HCT116 (cell line): ENCODE measurements at regions of chr7 and their contacts with region 1.

Region 1: DNA sequence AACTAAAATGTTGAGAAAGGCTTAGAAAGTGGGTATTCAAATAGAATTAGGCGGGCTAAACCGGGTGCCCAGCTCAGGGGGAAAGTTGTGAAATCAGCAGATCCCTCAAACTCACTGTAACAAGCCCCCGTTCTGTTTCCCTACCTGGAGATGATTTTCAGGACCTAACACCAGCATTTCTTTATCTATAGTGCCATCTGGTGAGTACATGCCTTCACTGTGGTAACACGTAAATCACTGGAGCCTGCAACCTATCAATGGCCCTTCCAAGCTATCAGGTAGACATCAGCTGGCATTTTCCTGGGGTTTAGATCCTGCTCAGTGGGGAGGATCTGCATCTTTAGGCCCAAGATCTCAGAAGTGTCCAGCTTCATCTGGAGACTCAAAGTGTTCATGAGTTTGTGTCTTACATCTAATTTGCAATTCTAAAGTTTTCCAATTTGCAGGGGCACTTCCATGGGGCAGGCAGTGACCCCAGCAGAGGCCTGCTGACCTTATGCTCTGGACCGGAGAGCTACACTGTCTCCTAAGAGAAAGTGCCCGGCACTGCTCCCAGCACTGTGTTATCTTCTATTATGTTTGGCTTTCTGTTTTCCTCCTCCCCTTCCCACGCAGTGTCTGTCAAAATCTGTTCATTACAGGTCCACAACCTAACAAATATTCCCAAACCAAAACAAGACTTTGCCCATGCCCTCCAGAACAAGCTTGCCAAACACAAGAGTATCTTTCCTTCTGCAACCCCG is 132.5 kb downstream of the LSM5 start:
- DNase-seq: peak; percentile 8
- ATAC-seq: peak; percentile 75
- H3K4me3 ChIP-seq: no peak overlapping the region
- H3K27ac ChIP-seq: no peak overlapping the region
- H3K4me1 ChIP-seq: no peaks in the 10 kb centered on the region
- H3K27me3 ChIP-seq: peaks cover 78% of the 10 kb centered on the region
- CTCF ChIP-seq: peak; percentile 12 to 28 (median 16); a peak in 3 of 6 replicates
- POLR2A ChIP-seq: no peak
- RAD21 ChIP-seq: peak; percentile 52

Region 2: GRCh38 chr7:32204361-32205018 is 153.2 kb before region 1 on chr7:
- CTCF ChIA-PET with region 1: interaction called, 23 read pairs
- POLR2A ChIA-PET with region 1: no interaction called
- RAD21 ChIA-PET with region 1: no interaction called
- intact Hi-C with region 1: no loop called
- DNase-seq: peak; percentile 65
- ATAC-seq: peak; percentile 94
- H3K4me3 ChIP-seq: no peak overlapping the region
- H3K27ac ChIP-seq: no peak overlapping the region
- H3K4me1 ChIP-seq: no peaks in the 10 kb centered on the region
- H3K27me3 ChIP-seq: peaks cover 20% of the 10 kb centered on the region; the same call in 1 of the 2 replicates
- CTCF ChIP-seq: peak; percentile 66 to 70 (median 69); a peak in 5 of 6 replicates
- POLR2A ChIP-seq: no peak
- RAD21 ChIP-seq: peak; percentile 78

Region 3: DNA sequence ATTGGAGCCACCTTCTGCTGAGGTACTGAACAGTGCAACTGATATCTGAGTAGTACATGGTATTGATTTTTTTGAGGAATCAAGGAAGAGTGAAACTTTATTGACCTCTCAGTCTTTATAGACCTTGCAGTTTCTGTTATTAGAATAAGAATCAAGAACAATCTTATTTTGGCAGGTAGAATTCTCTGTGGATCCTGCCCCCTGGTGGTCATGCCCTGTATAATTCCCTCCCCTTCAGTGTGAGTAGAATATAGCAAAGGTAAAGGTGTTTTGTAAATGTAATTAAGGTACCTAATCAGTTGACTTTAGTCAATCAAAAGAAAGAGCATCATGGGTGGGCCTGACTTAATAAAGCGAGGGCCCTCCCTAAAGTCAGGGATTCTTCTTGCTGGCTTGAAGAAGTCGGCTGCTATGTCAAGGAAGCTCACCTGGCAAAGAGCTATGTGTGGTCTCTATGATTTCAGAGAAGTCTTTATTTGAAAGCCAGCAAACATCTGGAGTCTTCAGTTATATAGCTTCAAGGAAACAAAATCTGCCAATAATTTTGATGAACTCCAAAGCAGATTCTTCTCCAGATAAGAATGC is 10.4 kb before region 1 on chr7:
- CTCF ChIA-PET with region 1: interaction called, 13 read pairs
- POLR2A ChIA-PET with region 1: no interaction called
- RAD21 ChIA-PET with region 1: no interaction called
- intact Hi-C with region 1: no loop called
- DNase-seq: peak; percentile 19
- ATAC-seq: peak; percentile 71; the same call in 1 of the 2 replicates
- H3K4me3 ChIP-seq: no peak overlapping the region
- H3K27ac ChIP-seq: no peak overlapping the region
- H3K4me1 ChIP-seq: no peaks in the 10 kb centered on the region
- H3K27me3 ChIP-seq: no peaks in the 10 kb centered on the region
- CTCF ChIP-seq: peak; percentile 48 to 87 (median 71); a peak in 5 of 6 replicates
- POLR2A ChIP-seq: no peak
- RAD21 ChIP-seq: peak; percentile 49

Region 4: DNA sequence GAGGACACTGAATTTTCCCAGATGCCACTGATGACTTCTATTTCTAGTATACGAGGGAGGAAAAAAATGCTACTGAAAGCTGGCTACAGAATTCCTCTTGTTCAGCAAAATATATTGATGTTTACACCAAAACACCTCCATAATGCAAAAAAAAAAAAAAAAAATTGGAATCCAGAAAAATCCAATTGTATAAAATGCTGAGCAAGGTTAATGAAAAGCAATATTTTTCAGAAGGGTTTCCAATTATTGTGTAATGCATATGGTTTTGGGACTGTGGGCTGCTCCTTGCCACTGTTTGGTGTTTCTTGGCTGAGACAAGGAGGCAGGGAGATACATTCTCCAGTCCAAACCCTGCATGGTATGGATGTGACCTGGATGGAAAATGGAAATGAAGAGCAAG is 48.7 kb after region 1 on chr7:
- CTCF ChIA-PET with region 1: no interaction called
- POLR2A ChIA-PET with region 1: no interaction called
- RAD21 ChIA-PET with region 1: no interaction called
- intact Hi-C with region 1: loop called (anchors 5 kb)
- DNase-seq: no peak
- ATAC-seq: no peak
- H3K4me3 ChIP-seq: no peak overlapping the region
- H3K27ac ChIP-seq: no peak overlapping the region
- H3K4me1 ChIP-seq: no peaks in the 10 kb centered on the region
- H3K27me3 ChIP-seq: no peaks in the 10 kb centered on the region
- CTCF ChIP-seq: no peak
- POLR2A ChIP-seq: no peak
- RAD21 ChIP-seq: no peak